B cell (primary cell): ENCODE measurements at regions of chr14 and their contacts with region 1.

Region 1: GRCh38 chr14:77097700-77098528 is at the start of gene CIPC:
- DNase-seq: peak; percentile 99
- ATAC-seq: peak; percentile 85
- H3K4me3 ChIP-seq: peak within 1 kb of the TSS; percentile 85 to 99 (median 99)
- H3K4me3 Mint-ChIP-seq: peak within 1 kb of the TSS; percentile 86
- H3K27ac ChIP-seq: peak within 1 kb of the TSS; percentile 92 to 99
- H3K27ac Mint-ChIP-seq: peak within 1 kb of the TSS; percentile 96
- H3K4me1 ChIP-seq: peaks cover 45 to 51% of the 10 kb centered on the region in 2 donors
- H3K4me1 Mint-ChIP-seq: peaks cover 66% of the 10 kb centered on the region
- H3K27me3 ChIP-seq: no peaks in the 10 kb centered on the region
- H3K27me3 Mint-ChIP-seq: no peaks in the 10 kb centered on the region
- CTCF ChIP-seq: no peak
- total RNA-seq, gene CIPC: 46.8 and 47.0 TPM in 2 replicates

Region 2: DNA sequence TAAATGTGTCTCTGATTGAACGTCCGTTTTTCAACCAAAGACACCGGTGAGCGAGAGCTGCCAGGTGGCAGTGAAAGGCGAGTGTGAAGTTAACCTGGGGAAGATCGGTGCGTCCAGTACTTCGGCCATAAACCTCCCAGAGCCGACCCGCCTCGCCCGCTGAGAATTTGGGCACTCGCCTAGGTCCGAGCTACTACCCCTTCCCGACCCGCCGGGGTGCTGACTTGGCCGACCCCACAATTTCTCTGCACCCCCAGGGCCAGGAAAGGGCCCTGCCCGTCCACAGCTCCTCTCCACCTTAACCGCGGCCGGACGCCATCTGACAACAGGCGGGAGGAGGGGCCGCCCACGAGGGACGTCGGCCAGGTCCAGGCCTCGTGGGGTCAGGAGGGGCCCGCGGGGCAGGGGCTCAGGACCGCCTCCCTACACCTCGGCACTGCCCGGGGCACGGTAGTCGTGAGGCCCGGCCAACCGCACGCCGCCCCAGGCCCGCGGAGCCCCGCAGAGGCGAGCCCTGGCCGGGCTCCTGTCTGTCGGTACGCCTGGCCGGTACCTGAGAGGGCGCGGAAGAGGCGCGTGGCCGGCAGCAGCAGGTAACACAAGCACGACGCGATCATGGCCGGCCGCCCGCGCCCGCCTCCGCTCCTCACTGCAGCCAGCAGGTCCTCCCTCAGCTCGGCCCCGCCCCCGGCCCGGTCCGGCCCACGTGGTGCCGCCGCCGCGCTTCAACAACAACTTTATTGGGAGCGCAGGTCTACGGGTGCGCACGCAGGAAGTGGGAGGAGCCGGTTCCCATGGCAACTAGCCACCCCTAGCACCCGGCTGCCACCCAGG is 285.5 kb before region 1 on chr14 and contains the start of gene ANGEL1:
- CTCF ChIA-PET with region 1: interaction called, 3 read pairs
- POLR2A ChIA-PET with region 1: no interaction called
- intact Hi-C with region 1: loop called (anchors 1 kb)
- DNase-seq: peak; percentile 99
- ATAC-seq: peak; percentile 95
- H3K4me3 ChIP-seq: peak within 1 kb of the TSS; percentile 31 to 79 (median 72)
- H3K4me3 Mint-ChIP-seq: peak within 1 kb of the TSS; percentile 90
- H3K27ac ChIP-seq: peak within 1 kb of the TSS; percentile 65 to 84
- H3K27ac Mint-ChIP-seq: peak within 1 kb of the TSS; percentile 99
- H3K4me1 ChIP-seq: peaks cover 20 to 25% of the 10 kb centered on the region in 2 donors
- H3K4me1 Mint-ChIP-seq: peaks cover 28% of the 10 kb centered on the region
- H3K27me3 ChIP-seq: peaks cover 0 to 5% (median 2%) of the 10 kb centered on the region in 4 experiments
- H3K27me3 Mint-ChIP-seq: no peaks in the 10 kb centered on the region
- CTCF ChIP-seq: no peak
- total RNA-seq, gene ANGEL1: 25.2 and 27.3 TPM in 2 replicates

Region 3: GRCh38 chr14:77053046-77053841 is 44.7 kb before region 1 on chr14:
- CTCF ChIA-PET with region 1: interaction called, 4 read pairs
- POLR2A ChIA-PET with region 1: no interaction called
- intact Hi-C with region 1: loop called (anchors 1 kb)
- DNase-seq: peak; percentile 89
- ATAC-seq: peak; percentile 94
- H3K4me3 ChIP-seq: no peak overlapping the region
- H3K4me3 Mint-ChIP-seq: no peak overlapping the region
- H3K27ac ChIP-seq: no peak overlapping the region
- H3K27ac Mint-ChIP-seq: no peak overlapping the region
- H3K4me1 ChIP-seq: peaks cover 11 to 15% of the 10 kb centered on the region in 2 donors
- H3K4me1 Mint-ChIP-seq: peaks cover 7% of the 10 kb centered on the region
- H3K27me3 ChIP-seq: no peaks in the 10 kb centered on the region
- H3K27me3 Mint-ChIP-seq: no peaks in the 10 kb centered on the region
- CTCF ChIP-seq: peak; percentile 95

Region 4: DNA sequence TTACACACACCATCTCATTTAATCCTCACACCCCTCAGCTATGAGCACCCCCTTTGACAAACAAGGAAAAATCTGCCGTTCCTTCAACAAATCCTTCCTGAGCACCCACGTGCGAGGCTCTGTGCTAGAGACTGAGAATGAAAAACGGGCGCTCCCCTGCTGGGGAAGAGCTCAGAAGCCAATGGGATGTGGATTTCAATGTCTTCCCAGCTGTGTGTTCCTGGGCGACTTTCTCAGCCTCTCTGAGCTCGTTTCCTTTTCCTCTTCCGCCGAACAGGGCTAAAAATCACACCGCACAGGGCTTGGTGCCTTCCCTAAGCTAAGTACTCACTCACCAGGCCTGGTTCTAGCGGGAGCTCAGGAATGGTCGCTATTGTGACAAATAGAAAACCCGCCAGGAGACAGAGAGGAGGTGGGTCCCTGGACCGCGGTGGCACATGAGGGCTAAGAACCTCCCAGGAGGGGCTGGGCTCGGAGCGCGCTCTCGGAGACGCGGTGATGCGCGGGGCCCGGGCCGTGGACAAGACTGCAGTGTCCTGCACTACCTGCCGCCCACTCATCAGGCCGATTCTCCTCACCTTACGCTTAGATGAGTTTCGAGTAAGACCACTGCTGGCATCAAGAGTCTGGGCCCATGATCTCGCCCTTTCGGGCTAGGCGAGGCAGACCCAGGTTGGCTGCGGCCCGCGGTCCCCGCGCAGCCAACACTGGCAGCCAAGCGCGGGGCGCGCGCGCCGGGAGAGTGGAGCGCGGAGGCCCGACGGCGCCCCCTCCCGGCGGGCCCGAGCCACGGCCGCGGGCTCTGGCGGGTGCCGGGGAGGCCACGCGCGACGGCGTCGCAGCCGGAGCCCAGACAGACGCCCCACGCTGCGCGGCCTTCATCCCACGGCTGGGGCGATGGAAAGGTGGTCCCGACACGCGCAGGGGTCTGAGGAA is 26.7 kb after region 1 on chr14:
- CTCF ChIA-PET with region 1: interaction called, 757 read pairs
- POLR2A ChIA-PET with region 1: interaction called, 110 read pairs
- intact Hi-C with region 1: loop called (anchors 1 kb)
- DNase-seq: peak; percentile 89
- ATAC-seq: peak; percentile 42
- H3K4me3 ChIP-seq: peak overlapping the region; percentile 32 to 79 (median 73)
- H3K4me3 Mint-ChIP-seq: peak overlapping the region; percentile 93
- H3K27ac ChIP-seq: peak overlapping the region; percentile 39 to 93
- H3K27ac Mint-ChIP-seq: peak overlapping the region; percentile 94
- H3K4me1 ChIP-seq: peaks cover 54 to 60% of the 10 kb centered on the region in 2 donors
- H3K4me1 Mint-ChIP-seq: peaks cover 59% of the 10 kb centered on the region
- H3K27me3 ChIP-seq: peaks cover 0 to 28% (median 4%) of the 10 kb centered on the region in 4 experiments
- H3K27me3 Mint-ChIP-seq: peaks cover 12% of the 10 kb centered on the region
- CTCF ChIP-seq: peak; percentile 78

Region 5: DNA sequence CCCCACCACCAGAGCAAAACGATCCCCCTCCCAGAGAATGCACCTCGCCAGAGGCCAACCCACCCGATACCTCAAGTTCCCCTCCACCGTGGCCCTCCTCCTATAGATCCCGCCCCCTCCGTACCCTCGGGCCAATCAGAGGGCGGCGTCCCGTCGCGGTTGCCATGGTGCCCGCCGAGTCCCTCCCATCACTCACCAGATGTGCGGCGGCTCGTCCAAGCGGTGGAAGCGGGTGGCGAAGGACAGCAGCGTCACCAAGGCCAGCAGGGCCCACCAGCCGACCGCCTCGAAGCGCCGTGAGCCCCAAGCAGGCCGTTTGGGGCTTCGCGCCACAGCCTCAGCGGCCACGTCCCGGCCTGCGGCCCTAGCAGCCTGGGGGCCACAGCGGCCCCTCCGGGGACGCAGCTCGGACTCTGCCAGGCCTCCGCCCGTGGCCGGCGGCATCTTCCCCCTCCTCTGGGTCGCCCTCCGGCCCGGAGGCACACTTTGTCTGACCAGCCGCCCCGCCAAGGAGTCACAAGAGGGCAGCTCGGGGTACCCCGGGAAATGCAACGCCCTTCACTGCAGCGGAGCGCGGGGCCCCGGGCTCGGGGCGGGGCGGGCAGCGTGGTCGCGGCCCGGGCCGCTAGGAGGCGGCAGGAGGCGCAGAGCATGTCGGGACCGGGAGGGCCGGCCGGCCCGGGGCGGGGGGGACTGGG is 222.5 kb after region 1 on chr14 and contains the start of gene POMT2:
- CTCF ChIA-PET with region 1: interaction called, 14 read pairs
- POLR2A ChIA-PET with region 1: interaction called, 8 read pairs
- intact Hi-C with region 1: loop called (anchors 1 kb)
- DNase-seq: peak; percentile 96
- ATAC-seq: peak; percentile 56
- H3K4me3 ChIP-seq: peak within 1 kb of the TSS; percentile 59 to 99 (median 93)
- H3K4me3 Mint-ChIP-seq: peak within 1 kb of the TSS; percentile 100
- H3K27ac ChIP-seq: peak within 1 kb of the TSS; percentile 89 to 92
- H3K27ac Mint-ChIP-seq: peak within 1 kb of the TSS; percentile 100
- H3K4me1 ChIP-seq: peaks cover 10 to 16% of the 10 kb centered on the region in 2 donors
- H3K4me1 Mint-ChIP-seq: peaks cover 18% of the 10 kb centered on the region
- H3K27me3 ChIP-seq: no peaks in the 10 kb centered on the region
- H3K27me3 Mint-ChIP-seq: no peaks in the 10 kb centered on the region
- CTCF ChIP-seq: peak; percentile 43
- total RNA-seq, gene POMT2: 36.6 and 44.1 TPM in 2 replicates